ENCODE measurements at regions of chr11 and their contacts with region 1.

Region 1: DNA sequence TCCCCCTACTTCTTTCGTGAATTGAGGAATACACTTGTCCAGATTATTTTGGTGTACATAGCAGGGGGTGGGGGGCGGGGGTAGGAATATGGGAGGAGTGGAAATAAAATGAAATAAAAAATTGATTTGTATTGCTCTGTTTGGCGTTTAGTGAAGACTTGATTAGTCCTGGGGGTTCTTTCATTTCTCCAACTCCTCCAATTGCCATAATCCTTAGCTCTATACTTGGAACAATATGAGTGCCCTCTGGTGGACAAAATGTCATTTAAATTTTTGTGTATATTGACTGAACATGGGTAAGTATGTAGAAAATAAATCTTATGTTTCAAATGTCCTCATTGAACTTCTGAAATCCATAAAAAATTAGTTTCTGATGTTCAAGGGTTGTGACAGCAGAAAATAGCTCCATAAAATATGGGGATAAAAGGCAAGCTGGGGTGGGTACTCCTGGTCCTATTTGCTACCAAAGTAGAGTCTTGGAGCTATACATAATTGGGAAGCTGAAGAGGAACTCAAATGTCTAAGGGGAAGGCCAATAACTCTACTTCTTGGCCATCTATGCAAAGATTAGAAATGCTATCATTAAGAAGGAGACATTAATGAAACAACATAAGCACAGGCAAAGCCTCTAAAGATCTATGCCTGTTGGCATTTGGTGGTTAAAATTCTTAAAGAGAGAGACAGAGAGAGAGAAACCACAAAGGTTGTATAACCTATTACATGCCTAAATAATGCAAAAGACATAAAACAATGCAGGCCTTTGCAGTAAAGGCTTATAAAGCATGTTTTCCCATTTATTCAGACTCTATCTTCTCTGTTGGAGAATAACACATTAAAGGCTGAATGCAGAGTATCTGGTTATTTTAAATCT is 421.6 kb downstream of the METTL15 start:
- DNase-seq: peak; percentile 65
- H3K4me3 ChIP-seq: no peak overlapping the region
- H3K27ac ChIP-seq: no peak overlapping the region
- H3K4me1 ChIP-seq: no peaks in the 10 kb centered on the region
- H3K27me3 ChIP-seq: no peaks in the 10 kb centered on the region
- CTCF ChIP-seq: peak; percentile 15 to 25
- POLR2A ChIP-seq: no peak

Region 2: DNA sequence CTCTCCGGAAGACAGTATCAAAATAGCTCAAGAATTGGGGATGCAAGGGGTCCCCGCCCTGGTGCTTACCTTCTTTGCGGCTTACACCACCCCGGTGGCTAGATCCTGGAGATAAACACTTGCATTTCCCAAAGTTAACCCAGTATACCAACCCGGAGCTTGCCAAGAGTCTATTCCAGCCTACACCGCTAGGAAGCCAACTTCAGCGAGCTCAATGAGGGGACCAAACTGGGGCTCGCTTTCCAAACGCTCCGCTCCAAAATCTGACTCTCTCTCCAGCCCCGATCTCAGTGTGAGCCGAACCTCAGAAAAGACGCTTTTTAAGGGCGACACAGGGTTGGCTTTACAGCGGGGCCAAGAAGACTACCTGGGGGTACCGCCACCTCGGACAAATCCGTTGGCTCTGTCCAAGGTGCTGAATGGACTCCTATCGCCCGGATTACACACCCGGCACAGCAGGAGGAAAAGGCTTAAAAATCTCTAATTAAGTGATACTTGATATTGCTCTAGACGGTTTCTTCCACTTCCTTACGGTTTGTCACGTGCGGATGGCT is 809.4 kb before region 1 on chr11:
- CTCF ChIA-PET with region 1: interaction called, 30 read pairs
- POLR2A ChIA-PET with region 1: no interaction called
- dilution Hi-C with region 1: no loop called
- intact Hi-C with region 1: no loop called
- DNase-seq: peak; percentile 52
- H3K4me3 ChIP-seq: no peak overlapping the region
- H3K27ac ChIP-seq: no peak overlapping the region
- H3K4me1 ChIP-seq: peaks cover 14% of the 10 kb centered on the region
- H3K27me3 ChIP-seq: peaks cover 50 to 80% of the 10 kb centered on the region in 2 experiments
- CTCF ChIP-seq: peak; percentile 8 to 20
- POLR2A ChIP-seq: no peak

Region 3: GRCh38 chr11:27934830-27935145 is 595.0 kb before region 1 on chr11:
- CTCF ChIA-PET with region 1: interaction called, 10 read pairs
- POLR2A ChIA-PET with region 1: no interaction called
- dilution Hi-C with region 1: no loop called
- intact Hi-C with region 1: no loop called
- DNase-seq: peak; percentile 62
- H3K4me3 ChIP-seq: no peak overlapping the region
- H3K27ac ChIP-seq: peak overlapping the region; percentile 78
- H3K4me1 ChIP-seq: peaks cover 18% of the 10 kb centered on the region
- H3K27me3 ChIP-seq: no peaks in the 10 kb centered on the region
- CTCF ChIP-seq: no peak
- POLR2A ChIP-seq: no peak

Region 4: GRCh38 chr11:28517621-28518020 is 12.2 kb before region 1 on chr11:
- CTCF ChIA-PET with region 1: interaction called, 12 read pairs
- POLR2A ChIA-PET with region 1: no interaction called
- dilution Hi-C with region 1: no loop called
- intact Hi-C with region 1: no loop called
- DNase-seq: no peak
- H3K4me3 ChIP-seq: no peak overlapping the region
- H3K27ac ChIP-seq: no peak overlapping the region
- H3K4me1 ChIP-seq: no peaks in the 10 kb centered on the region
- H3K27me3 ChIP-seq: no peaks in the 10 kb centered on the region
- CTCF ChIP-seq: no peak
- POLR2A ChIP-seq: no peak

Region 5: DNA sequence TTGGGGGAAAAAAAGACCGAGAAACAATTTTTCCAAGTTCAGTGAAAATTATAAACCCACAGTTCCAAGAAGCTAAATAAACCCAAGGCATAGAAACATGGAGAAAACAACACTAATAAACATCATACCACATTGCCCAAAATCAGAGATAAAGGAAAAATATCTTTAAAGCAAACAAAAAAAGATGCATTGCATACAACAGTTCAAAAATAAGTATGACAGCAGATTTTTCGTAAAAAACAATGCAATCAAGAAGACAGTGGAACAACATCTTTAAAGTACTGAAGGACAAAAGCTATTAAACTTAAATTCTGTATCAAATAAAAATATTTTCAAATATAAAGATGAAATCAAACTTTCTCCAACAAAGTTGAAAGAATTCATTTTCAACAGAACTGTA is 499.7 kb after region 1 on chr11:
- CTCF ChIA-PET with region 1: no interaction called
- POLR2A ChIA-PET with region 1: no interaction called
- dilution Hi-C with region 1: no loop called
- intact Hi-C with region 1: no loop called
- DNase-seq: no peak
- H3K4me3 ChIP-seq: no peak overlapping the region
- H3K27ac ChIP-seq: no peak overlapping the region
- H3K4me1 ChIP-seq: peaks cover 4% of the 10 kb centered on the region
- H3K27me3 ChIP-seq: no peaks in the 10 kb centered on the region
- CTCF ChIP-seq: no peak
- POLR2A ChIP-seq: no peak

Region 6: GRCh38 chr11:29075726-29076125 is 546.0 kb after region 1 on chr11:
- CTCF ChIA-PET with region 1: no interaction called
- POLR2A ChIA-PET with region 1: no interaction called
- dilution Hi-C with region 1: no loop called
- intact Hi-C with region 1: no loop called
- DNase-seq: no peak
- H3K4me3 ChIP-seq: no peak overlapping the region
- H3K27ac ChIP-seq: no peak overlapping the region
- H3K4me1 ChIP-seq: no peaks in the 10 kb centered on the region
- H3K27me3 ChIP-seq: no peaks in the 10 kb centered on the region
- CTCF ChIP-seq: no peak
- POLR2A ChIP-seq: no peak

Region 7: GRCh38 chr11:29159552-29160465 is 630.0 kb after region 1 on chr11:
- CTCF ChIA-PET with region 1: interaction called, 48 read pairs
- POLR2A ChIA-PET with region 1: no interaction called
- dilution Hi-C with region 1: no loop called
- intact Hi-C with region 1: loop called (anchors 1 kb)
- DNase-seq: peak; percentile 82
- H3K4me3 ChIP-seq: no peak overlapping the region
- H3K27ac ChIP-seq: peak overlapping the region; percentile 12
- H3K4me1 ChIP-seq: peaks cover 9% of the 10 kb centered on the region
- H3K27me3 ChIP-seq: no peaks in the 10 kb centered on the region
- CTCF ChIP-seq: peak; percentile 67 to 71
- POLR2A ChIP-seq: no peak